Naive thymus-derived CD4-positive, alpha-beta T cell (primary cell): ENCODE measurements at regions of chr17 and their contacts with region 1.

Region 1: DNA sequence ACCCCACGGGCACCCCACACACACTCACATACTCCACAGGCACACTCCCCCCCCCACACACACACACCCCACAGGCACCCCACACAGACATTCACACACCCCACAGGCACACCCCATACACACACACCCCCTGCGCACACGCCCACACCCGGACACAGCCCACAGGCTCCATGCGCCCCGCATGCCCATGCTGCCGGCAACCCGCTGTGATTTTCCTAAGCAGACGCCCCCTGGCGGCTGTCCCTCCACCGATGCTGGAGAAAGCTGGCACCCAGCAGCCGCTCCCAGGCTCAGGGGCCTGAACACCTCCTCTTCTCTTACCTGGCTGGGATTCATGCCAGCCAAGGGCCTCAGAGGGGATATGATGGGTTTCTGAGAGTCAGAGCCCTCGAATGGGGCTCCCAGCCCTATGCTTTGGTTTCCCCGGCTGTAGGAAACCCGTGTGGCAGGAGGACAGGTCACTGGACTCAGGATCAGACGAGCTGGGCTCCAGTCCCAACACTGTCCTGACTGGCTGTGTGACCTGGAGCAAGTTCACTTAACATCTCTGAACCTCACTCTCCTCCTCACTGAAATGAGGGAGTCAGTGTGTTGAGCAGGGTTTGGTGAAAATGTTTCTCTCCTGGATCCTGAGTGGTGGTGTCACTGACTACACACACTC is 19.6 kb upstream of the TNFRSF13B start:
- DNase-seq: peak; percentile 53 to 80 (median 72)
- ATAC-seq: peak; percentile 67
- H3K4me3 ChIP-seq: no peak overlapping the region
- H3K4me3 Mint-ChIP-seq: peak overlapping the region in 4 of 10 donors; percentile 25 to 69 (median 33)
- H3K27ac ChIP-seq: no peak overlapping the region
- H3K27ac Mint-ChIP-seq: peak overlapping the region in 4 of 9 donors; percentile 17 to 69 (median 46)
- H3K4me1 ChIP-seq: peaks cover 34 to 36% of the 10 kb centered on the region in 2 donors
- H3K4me1 Mint-ChIP-seq: peaks cover 24 to 41% (median 31%) of the 10 kb centered on the region in 7 donors
- H3K27me3 ChIP-seq: no peaks in the 10 kb centered on the region
- H3K27me3 Mint-ChIP-seq: peaks cover 0 to 10% (median 0%) of the 10 kb centered on the region in 5 donors

Region 2: GRCh38 chr17:16568541-16569357 is 422.7 kb before region 1 on chr17 and contains the start of gene ZNF287:
- CTCF ChIA-PET with region 1: no interaction called
- POLR2A ChIA-PET with region 1: no interaction called
- intact Hi-C with region 1: no loop called
- DNase-seq: peak; percentile 81 to 96 (median 92)
- ATAC-seq: peak; percentile 98
- H3K4me3 ChIP-seq: peak within 1 kb of the TSS; percentile 73
- H3K4me3 Mint-ChIP-seq: peak within 1 kb of the TSS; percentile 81 to 87 (median 86)
- H3K27ac ChIP-seq: peak within 1 kb of the TSS; percentile 82
- H3K27ac Mint-ChIP-seq: peak within 1 kb of the TSS; percentile 59 to 97 (median 91)
- H3K4me1 ChIP-seq: peaks cover 6 to 14% of the 10 kb centered on the region in 2 donors
- H3K4me1 Mint-ChIP-seq: peaks cover 8 to 29% (median 19%) of the 10 kb centered on the region in 7 donors
- H3K27me3 ChIP-seq: no peaks in the 10 kb centered on the region
- H3K27me3 Mint-ChIP-seq: peaks cover 0 to 10% (median 0%) of the 10 kb centered on the region in 5 donors
- total RNA-seq, gene ZNF287: 9.6 to 18.1 (median 13.4) TPM

Region 3: DNA sequence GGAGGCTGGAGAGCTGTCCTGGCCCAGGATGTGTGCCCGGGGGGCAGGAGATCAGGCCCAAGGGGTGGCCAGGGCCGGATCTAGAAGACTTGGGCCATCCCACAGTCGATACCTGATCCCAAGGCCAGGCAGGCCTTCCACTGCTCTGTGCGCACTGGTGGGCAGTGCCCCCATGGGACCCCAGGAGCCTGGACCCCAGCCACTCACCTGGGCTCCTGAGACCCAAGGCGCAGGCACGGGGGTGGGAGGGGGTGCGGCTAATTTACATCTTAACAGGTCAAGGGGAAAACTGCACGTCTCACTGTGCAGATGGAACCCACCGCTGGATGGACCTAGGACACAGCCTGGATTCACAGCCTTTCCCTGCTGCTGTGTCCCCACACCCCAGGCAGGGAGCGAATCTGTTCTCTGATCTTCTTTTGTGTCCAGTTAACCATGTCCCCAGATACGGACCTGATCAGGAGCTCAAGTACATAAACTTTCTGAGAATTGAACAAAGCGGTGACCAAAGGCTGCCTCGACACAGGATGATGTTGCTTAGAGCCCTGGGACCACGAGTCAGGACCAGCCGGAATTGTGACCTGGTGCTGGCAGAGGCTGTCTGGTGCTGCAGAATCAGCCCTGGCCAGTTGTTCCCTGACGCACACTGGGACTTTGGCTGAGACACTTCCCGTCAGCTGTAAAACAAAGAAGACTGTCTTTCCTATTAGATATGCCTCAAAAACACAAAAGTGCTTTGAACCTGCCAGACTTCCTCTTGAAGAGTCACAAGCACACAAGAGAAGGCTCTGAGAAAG is 80.1 kb before region 1 on chr17:
- CTCF ChIA-PET with region 1: interaction called, 3 read pairs
- POLR2A ChIA-PET with region 1: no interaction called
- intact Hi-C with region 1: loop called in 1 of 2 experiments (anchors 5 kb)
- DNase-seq: peak in 8 of 9 donors; percentile 15 to 69 (median 55)
- ATAC-seq: peak; percentile 71
- H3K4me3 ChIP-seq: peak overlapping the region; percentile 25
- H3K4me3 Mint-ChIP-seq: peak overlapping the region in 9 of 10 donors; percentile 55 to 83 (median 77)
- H3K27ac ChIP-seq: no peak overlapping the region
- H3K27ac Mint-ChIP-seq: peak overlapping the region in 8 of 9 donors; percentile 26 to 96 (median 88)
- H3K4me1 ChIP-seq: peaks cover 0 to 52% of the 10 kb centered on the region in 2 donors
- H3K4me1 Mint-ChIP-seq: peaks cover 21 to 78% (median 67%) of the 10 kb centered on the region in 7 donors
- H3K27me3 ChIP-seq: peaks cover 0 to 6% of the 10 kb centered on the region in 2 donors
- H3K27me3 Mint-ChIP-seq: peaks cover 0 to 21% (median 0%) of the 10 kb centered on the region in 5 donors

Region 4: DNA sequence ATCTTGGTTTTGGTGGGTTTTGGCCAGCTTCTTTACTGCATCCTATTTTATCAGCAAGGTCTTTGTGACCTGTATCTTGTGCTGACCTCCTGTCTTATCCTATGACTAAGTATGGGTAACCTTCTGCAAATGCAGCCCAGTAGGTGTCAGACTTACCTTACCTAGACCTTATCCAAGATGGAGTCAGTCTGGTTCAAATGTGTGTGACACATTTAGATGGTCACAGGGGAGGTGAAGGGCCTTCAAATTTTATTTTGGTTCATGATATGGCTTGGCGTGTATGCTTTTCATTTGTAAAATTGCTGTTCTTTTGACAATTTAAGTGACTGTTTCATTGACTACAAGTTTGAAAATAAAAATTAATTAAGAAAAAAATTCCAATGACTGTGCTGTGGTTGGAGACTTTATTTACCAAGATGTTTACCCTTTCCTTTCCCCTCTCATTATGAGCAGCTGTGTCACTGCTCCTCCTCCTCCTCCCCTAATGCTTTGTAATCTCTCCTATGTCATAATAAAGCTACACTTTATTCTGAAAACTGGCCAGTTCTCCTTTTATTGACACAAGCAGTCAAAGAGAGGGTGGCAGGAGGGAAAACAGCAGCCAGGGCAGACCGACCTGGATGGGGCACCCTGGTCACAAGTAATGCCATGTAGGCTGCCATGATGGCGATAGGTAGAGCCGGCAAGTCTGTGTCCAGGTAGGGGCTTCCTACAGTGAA is 68.9 kb before region 1 on chr17:
- CTCF ChIA-PET with region 1: no interaction called
- POLR2A ChIA-PET with region 1: no interaction called
- intact Hi-C with region 1: loop called (anchors 1 kb)
- DNase-seq: no peak
- ATAC-seq: no peak
- H3K4me3 ChIP-seq: no peak overlapping the region
- H3K4me3 Mint-ChIP-seq: no peak overlapping the region
- H3K27ac ChIP-seq: no peak overlapping the region
- H3K27ac Mint-ChIP-seq: no peak overlapping the region
- H3K4me1 ChIP-seq: no peaks in the 10 kb centered on the region
- H3K4me1 Mint-ChIP-seq: peaks cover 0 to 7% (median 0%) of the 10 kb centered on the region in 7 donors
- H3K27me3 ChIP-seq: no peaks in the 10 kb centered on the region
- H3K27me3 Mint-ChIP-seq: no peaks in the 10 kb centered on the region